AG04449 (cell line): ENCODE measurements at regions of chr2 and their contacts with region 1.

Region 1: DNA sequence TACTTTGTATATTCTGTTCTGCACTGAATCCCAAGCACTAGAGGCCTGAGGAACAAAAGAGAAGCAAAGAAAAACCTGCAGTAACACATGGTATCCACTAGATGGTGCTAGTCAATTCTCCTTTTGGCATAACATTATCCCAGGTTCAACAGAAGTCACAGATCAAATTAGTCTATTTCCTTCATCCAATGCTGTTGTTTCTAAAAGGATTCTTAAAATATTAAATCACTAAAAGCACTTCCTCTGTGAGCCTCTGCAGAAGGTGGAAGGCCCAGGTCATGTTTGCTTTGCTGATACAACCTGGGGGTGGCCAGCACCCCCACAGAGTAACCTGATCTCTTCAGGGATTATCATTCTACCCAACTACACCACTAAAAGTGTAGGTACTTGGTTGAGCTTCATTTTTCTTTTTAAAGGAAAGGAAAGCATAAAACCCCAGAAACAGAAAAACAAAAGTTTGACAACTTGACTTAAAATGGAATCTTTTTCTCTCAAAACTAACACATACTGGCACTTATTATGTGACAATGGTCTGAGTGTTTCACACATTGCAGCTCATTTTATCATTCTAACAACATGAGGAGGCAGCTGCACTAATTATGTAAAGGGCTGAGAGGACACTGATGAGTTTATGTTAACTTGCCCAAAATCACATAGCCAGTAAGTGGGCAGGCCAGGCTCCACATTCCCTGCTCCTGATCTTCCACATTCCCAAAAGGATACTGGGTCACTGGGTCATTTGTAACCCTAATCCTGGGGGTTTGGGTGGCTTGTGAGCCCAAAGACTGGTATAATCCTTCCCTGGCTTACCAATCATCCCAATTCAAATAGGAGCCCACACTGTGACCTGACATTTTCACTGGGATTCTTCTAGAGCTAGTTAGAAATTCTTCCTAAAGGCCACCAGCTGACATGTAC is 66.8 kb upstream of the DNER start:
- DNase-seq: no peak
- H3K4me3 ChIP-seq: no peak overlapping the region
- CTCF ChIP-seq: peak; percentile 81

Region 2: DNA sequence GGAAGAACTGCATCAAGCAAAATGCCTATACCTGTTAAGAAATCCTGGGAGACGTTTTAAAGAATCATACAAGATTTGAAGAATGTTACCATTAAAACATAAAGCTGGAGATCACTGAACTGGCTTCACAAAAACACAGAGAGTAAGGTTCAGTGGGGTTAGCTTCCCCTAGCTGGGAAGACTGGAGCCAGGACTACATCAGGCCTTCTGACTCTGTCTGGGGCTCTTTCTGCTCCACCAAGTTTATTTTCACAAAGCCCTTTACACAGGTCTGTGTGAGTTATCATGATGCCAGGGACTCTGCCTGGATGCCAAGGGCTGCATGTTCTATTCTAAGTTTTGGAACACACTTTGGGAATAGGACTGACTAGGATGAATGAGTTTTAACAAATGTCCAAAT is 19.5 kb before region 1 on chr2:
- CTCF ChIA-PET with region 1: interaction called, 19 read pairs
- POLR2A ChIA-PET with region 1: no interaction called
- DNase-seq: no peak
- H3K4me3 ChIP-seq: no peak overlapping the region
- CTCF ChIP-seq: no peak

Region 3: DNA sequence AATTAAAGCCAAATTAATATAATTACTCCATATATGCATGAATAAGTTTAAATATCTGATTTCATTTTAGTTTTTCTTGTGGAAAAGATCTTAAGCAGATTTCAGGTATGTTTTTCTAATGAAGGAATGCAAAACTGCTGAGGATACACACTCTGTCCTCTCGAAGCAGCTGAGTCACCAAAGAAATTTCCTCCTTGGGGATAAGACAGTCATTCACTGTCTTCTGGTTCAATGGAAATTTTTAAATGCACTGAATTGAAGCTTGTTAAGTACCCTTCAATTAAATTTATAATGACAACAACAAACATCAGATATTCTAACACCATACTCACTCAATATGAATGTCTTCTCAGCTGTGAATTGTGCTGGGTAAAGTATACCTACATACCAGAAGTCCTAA is 34.7 kb after region 1 on chr2:
- CTCF ChIA-PET with region 1: interaction called, 10 read pairs
- POLR2A ChIA-PET with region 1: no interaction called
- DNase-seq: peak; percentile 14
- H3K4me3 ChIP-seq: no peak overlapping the region
- CTCF ChIP-seq: no peak

Region 4: DNA sequence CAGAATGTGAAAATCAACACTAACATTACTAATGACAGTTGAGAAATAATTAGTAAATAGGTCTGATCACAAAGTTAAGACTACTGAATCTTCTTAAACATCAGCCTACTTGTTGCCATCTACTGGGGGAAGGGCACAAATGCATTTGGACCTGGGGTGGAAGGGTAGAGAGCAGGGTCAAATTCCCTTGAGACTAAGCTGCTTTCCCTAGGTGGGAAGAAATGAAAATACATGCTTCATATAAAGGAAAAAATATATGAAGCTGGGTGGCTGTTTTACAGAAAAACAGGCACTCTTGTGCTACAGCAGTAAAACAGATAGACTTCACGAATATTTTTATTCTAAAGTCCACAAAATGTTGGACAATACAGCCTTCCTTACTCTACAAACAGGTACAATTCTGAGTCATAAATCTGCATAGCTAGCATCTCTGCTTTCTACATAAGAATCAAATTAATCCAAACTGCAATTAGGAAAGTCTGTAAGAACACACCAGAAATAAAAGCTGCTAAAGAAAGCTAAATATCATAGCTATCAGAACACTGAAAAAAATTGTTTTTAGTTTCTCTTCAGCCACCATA is 129.8 kb after region 1 on chr2:
- CTCF ChIA-PET with region 1: interaction called, 12 read pairs
- POLR2A ChIA-PET with region 1: no interaction called
- DNase-seq: no peak
- H3K4me3 ChIP-seq: no peak overlapping the region
- CTCF ChIP-seq: peak; percentile 9

Region 5: GRCh38 chr2:230023309-230023708 is 242.2 kb after region 1 on chr2:
- CTCF ChIA-PET with region 1: no interaction called
- POLR2A ChIA-PET with region 1: no interaction called
- DNase-seq: no peak
- H3K4me3 ChIP-seq: no peak overlapping the region
- CTCF ChIP-seq: no peak

Region 6: GRCh38 chr2:231425811-231426728 is 1645.0 kb after region 1 on chr2:
- CTCF ChIA-PET with region 1: no interaction called
- POLR2A ChIA-PET with region 1: no interaction called
- DNase-seq: no peak
- H3K4me3 ChIP-seq: no peak overlapping the region
- CTCF ChIP-seq: no peak